Esophagus squamous epithelium (tissue), 5 donors: ENCODE measurements at regions of chr13 and their contacts with region 1.

Region 1: DNA sequence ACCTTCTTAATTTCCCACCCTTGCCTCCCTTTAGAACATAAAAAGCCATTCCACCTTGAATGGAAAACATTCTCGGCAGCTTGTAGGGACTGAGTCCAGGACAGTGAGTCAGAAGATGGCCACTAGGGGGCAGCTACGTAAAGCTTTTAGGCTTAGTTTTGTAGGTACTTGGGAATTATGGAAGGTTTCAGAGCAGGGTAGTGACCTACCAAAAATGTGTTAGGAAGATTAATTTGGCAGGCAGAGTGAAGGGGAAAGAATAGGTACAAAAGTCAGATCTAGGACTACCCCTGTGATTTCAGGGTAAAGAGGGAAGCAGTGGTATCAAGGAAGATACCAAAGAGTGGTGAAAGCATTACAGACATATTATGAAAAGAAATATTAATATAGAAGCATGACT is 198.4 kb downstream of the NDFIP2 start:
- DNase-seq: no peak
- H3K4me3 ChIP-seq: no peak overlapping the region
- H3K27ac ChIP-seq: no peak overlapping the region
- H3K4me1 ChIP-seq: peaks cover 7 to 21% (median 7%) of the 10 kb centered on the region in 3 donors
- H3K27me3 ChIP-seq: no peaks in the 10 kb centered on the region
- CTCF ChIP-seq: peak; percentile 41 to 82 (median 74)
- POLR2A ChIP-seq: no peak

Region 2: DNA sequence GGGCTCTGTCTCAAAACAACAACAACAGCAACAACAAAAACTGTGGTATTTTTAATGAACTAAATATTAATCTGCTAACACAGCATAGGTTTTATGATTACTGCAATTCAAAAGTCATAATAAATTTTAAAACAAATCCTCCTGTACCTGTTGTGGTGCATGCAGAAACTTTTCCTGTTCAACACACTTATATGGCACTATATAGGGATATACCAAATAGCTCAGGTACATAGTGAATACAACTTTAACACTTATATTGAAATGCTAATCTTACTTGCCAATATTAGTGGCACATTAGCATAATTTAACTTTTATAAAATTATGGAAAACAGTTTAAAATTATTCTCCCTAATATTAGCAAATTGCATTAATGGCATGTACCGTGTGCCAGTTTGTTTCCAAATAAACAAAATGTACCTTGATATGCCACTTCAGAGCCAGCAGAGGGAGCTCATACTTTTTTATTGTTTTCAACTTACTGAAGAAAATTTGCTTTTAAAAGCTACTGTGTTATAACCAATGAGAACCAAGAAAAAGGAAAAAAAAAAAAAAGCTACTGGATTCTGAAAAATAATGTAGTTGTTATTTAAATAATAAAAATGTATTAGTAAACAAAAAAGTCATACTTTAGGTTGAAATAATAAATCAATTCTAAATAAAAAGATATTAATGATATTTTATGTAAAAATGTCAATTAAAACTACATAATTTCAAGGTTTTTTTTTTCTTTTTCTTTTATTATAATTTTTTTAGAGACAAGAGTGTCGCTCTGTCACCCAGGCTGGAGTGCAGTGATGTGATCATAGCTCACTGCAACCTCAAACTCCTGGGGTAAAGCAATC is 255.3 kb before region 1 on chr13:
- intact Hi-C with region 1: loop called (anchors 10 kb)
- DNase-seq: no peak
- H3K4me3 ChIP-seq: no peak overlapping the region
- H3K27ac ChIP-seq: no peak overlapping the region
- H3K4me1 ChIP-seq: peaks cover 0 to 4% (median 0%) of the 10 kb centered on the region in 3 donors
- H3K27me3 ChIP-seq: no peaks in the 10 kb centered on the region
- CTCF ChIP-seq: peak; percentile 48 to 79 (median 64)
- POLR2A ChIP-seq: no peak

Region 3: DNA sequence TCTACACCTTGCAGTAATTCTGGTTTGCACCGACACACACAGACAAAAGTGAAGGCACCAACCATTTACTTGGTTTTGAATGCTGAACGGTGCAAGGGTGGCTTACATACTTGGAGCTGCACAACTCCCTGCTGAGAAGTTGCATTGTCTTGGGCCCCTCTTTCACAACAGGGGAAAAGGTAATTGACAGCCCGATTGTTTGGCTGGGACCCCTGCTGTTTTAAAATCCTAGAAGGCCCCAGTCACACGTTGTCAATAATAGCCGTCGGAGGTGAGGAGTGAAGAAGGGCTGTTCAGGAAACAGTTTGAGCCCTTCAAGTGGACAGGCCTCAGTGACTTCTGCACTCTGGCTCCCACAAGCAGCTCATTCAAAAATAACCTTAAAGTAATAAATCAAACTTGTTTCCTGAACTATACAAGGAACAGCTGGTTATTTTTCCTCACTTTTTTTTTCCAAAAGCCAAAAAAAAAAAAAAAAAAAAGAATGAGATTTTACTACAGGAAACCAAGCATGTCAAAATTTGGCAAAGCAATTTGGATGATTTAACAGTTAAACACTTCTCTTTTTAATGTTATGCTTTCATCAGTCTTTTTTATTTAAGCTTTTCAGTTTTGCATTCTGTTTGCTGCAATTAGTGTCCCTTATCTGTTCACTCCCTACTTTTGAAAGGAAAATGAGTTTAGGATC is 680.6 kb after region 1 on chr13:
- intact Hi-C with region 1: loop called (anchors 10 kb)
- DNase-seq: no peak
- H3K4me3 ChIP-seq: no peak overlapping the region
- H3K27ac ChIP-seq: no peak overlapping the region
- H3K4me1 ChIP-seq: peaks cover 0 to 23% (median 0%) of the 10 kb centered on the region in 3 donors
- H3K27me3 ChIP-seq: no peaks in the 10 kb centered on the region
- CTCF ChIP-seq: no peak
- POLR2A ChIP-seq: no peak